Right ventricle myocardium inferior (tissue), 1 donor: ENCODE measurements at regions of chr3 and their contacts with region 1.

Region 1: DNA sequence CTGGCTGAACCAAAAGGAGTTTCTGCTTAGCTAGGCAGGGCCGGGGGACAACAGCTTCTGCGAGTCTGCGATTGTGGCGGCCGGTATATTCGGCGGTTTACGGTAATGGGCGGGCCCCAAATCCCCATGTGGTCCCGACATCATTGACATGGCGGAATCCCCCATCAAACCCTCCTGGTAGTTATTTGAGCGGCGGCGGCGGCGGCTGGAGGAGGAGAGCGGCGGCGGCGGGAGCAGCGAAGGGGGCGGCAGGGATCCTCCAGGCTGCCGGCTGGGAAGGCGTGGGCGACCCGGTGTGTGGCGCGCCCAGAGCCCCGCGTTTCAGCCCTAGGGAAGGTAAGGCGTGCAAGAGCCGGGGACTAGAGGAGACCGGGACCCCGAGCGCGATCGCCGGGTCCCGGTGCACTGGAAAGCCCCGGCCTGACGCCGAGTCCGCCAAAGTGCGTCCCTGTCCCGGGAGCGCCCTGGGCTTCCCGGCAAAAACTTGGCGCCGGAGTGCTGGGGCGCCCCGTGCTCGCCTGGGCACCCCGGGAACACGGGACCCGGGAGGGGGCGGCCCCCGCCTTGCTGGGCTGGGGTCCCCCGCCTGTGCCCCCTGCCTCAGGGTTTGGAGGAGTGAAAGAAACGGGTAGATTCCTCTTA is at the start of gene FNDC3B:
- DNase-seq: peak; percentile 95
- ATAC-seq: peak; percentile 91
- total RNA-seq, gene FNDC3B: 57.8 TPM

Region 2: DNA sequence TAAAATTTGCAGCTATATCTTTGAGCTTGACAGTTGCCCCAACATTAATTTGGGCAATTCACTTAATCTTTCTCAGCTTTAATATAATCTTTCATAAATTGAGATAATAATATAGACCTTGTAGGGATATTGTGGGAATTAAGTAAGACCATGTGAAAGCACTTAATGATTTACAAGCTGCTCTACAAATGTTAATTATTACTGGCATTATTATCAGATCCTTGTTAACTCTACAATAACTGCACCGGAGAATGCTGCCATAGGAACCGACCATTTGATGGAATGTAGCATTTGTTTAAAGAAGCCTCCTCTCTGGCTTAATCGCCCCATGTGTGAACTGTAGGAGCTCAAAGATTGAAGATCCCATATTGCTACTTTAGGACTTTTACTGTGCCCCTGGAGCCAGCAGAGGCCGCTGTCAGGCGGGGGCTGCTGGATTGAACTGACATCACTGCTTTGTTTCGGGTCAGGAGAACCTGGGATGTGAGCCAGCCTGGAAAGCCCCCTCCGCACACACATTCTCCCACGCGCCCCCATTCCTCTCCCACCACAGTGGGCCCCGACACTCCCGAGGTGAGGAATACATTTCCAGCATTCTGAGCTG is 425.1 kb before region 1 on chr3:
- intact Hi-C with region 1: no loop called
- DNase-seq: no peak
- ATAC-seq: no peak

Region 3: GRCh38 chr3:171838218-171838761 is 201.3 kb before region 1 on chr3:
- intact Hi-C with region 1: loop called (anchors 5 kb)
- DNase-seq: peak; percentile 68
- ATAC-seq: peak; percentile 87

Region 4: DNA sequence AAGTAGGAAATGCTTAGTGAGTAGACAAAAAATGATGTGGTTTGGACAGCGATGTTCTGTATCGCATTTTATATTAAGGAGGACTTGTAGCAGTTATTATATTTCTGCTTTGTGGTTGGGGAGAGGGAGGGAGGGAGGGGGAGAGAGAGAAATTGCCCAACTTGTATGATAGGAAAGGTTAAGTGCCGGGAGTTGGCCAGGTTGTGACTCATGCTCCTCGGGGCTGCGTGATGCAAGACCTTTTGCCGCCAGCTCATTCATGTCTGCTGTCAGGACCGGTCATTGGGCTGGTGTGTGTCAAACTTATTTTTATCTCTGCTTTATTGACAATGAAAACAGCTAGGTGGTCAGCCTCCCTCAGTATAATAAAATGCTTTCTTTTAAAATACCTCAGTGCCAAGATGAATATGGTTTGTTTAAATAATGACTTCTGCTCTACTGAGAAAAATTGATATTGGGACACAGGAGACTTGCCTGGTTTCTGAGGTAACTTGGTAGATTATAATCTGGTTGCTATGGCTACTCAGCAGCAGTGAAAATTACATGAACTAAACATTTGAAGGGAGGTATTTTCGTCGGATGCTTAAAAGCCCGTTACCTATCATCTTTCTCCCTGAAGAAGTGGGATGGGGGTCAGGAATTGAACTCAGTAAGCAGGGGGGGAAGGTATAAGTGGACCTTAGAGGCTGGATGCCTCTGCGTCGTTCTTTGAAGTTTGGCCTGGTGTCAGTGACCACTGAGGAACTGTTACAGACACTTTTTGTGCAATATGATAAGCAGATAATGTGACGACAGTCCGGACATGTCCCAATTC is 90.5 kb after region 1 on chr3:
- intact Hi-C with region 1: loop called (anchors 2 kb)
- DNase-seq: peak; percentile 93
- ATAC-seq: peak; percentile 90

Region 5: DNA sequence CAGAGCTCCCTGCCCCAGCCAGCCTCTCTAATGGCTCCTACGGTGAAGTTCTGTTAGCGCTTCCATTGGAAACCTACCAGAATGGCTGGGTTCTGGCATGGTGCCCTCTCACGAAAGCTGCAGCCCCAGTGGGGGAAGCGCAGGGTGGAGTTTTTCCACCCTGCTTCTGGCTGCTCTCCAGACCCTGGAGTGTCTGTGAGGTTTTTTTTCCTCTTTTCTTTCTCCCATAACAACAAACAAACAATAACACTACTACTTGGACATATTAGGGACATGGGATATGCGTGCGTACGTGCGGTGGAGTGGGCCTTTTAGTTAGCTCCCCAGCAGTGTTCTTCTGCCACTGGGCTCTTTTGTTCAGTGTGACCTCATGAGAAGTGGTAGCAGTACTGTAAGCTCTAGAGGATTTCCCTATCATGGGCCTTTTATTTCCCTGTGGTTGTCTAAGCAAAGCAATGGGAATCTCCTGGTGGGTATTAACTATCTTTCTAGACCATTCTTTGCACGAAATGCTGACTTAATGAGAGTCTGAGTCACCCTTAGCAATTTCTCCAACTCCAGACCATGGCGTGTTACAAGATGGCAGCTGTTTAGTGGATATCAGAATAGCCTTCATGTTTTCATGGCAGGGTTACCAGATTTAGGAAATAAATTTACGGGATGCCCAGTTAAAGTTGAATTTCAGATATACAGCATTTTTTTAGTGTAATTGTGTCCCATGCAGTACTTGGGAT is 161.7 kb after region 1 on chr3:
- intact Hi-C with region 1: loop called (anchors 2 kb)
- DNase-seq: peak; percentile 88
- ATAC-seq: peak; percentile 90

Region 6: GRCh38 chr3:172317984-172318383 is 278.4 kb after region 1 on chr3:
- intact Hi-C with region 1: loop called (anchors 5 kb)
- DNase-seq: no peak
- ATAC-seq: peak; percentile 72